ENCODE measurements at regions of chr5 and their contacts with region 1.

Region 1: GRCh38 chr5:39424736-39425637 is at the start of gene DAB2:
- DNase-seq: peak; percentile 84 to 90
- ATAC-seq: peak; percentile 84 to 91 (median 86)
- H3K4me3 ChIP-seq: peak within 1 kb of the TSS; percentile 39 to 74 (median 64)
- H3K27ac ChIP-seq: peak within 1 kb of the TSS; percentile 67 to 92 (median 84)
- H3K4me1 ChIP-seq: peaks cover 0 to 62% (median 53%) of the 10 kb centered on the region in 9 donors
- H3K27me3 ChIP-seq: peaks cover 0 to 19% (median 0%) of the 10 kb centered on the region in 7 donors
- CTCF ChIP-seq: peak in 8 of 9 donors; percentile 35 to 84 (median 64)
- total RNA-seq, gene DAB2: 14.2 to 64.7 (median 26.6) TPM

Region 2: GRCh38 chr5:39498247-39498952 is 73.4 kb after region 1 on chr5:
- intact Hi-C with region 1: loop called in 1 of 10 experiments (anchors 5 kb)
- DNase-seq: no peak
- ATAC-seq: no peak
- H3K4me3 ChIP-seq: no peak overlapping the region
- H3K27ac ChIP-seq: no peak overlapping the region
- H3K4me1 ChIP-seq: peaks cover 0 to 59% (median 25%) of the 10 kb centered on the region in 9 donors
- H3K27me3 ChIP-seq: no peaks in the 10 kb centered on the region
- CTCF ChIP-seq: no peak

Region 3: DNA sequence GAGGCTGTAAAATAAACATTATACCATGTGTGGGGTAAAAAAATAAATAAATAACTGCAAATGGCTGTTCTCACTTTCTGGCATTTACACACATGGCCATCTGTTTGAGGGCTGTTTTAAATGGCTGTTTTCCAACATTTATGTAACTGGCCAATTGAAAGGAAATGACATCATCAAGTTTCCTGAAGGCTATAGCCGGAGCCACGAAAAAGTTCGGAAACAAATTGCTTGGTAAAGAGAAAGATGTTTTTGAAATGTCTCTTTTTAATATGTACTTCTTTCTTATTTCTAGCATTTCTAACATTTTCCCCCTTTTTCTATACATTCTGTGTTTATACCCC is 95.2 kb after region 1 on chr5:
- intact Hi-C with region 1: loop called in 4 of 10 experiments (anchors 5 kb)
- DNase-seq: peak in 1 of 2 donors; percentile 56
- ATAC-seq: peak in 7 of 8 donors; percentile 62 to 96 (median 92)
- H3K4me3 ChIP-seq: peak overlapping the region in 4 of 10 donors; percentile 20 to 24 (median 23)
- H3K27ac ChIP-seq: peak overlapping the region in 9 of 10 donors; percentile 6 to 89 (median 78)
- H3K4me1 ChIP-seq: peaks cover 0 to 51% (median 24%) of the 10 kb centered on the region in 9 donors
- H3K27me3 ChIP-seq: no peaks in the 10 kb centered on the region
- CTCF ChIP-seq: no peak

Region 4: DNA sequence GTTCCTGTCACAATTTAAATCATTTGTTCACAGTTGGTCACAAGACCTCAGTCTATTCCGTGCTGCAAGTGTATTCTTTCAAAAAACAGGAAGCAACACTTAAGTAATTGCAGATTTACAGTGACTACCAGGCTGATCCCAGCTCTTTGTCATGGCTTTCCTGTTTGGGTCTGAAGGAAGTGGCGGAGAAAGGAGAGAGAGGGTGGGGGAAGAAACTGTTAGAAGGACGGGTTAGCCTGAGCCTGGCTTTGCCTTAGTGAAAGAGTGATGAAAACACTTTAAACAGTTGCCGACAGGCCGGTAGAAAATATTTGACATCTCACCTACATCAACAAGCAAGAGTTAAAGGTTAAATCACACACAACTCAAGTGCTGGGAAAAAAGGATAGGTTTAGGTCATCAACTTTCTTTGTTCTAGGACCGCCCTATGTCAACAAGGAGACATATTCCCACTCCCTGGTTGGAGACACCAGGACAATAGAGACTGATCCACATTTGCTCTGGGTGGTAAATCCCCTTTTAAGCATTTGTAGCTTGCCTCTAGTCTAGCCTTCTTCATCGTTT is 102.0 kb after region 1 on chr5:
- intact Hi-C with region 1: loop called in 4 of 10 experiments (anchors 5 kb)
- DNase-seq: peak in 1 of 2 donors; percentile 54
- ATAC-seq: peak; percentile 65 to 94 (median 88)
- H3K4me3 ChIP-seq: no peak overlapping the region
- H3K27ac ChIP-seq: peak overlapping the region; percentile 33 to 89 (median 70)
- H3K4me1 ChIP-seq: peaks cover 0 to 38% (median 18%) of the 10 kb centered on the region in 9 donors
- H3K27me3 ChIP-seq: no peaks in the 10 kb centered on the region
- CTCF ChIP-seq: no peak

Region 5: DNA sequence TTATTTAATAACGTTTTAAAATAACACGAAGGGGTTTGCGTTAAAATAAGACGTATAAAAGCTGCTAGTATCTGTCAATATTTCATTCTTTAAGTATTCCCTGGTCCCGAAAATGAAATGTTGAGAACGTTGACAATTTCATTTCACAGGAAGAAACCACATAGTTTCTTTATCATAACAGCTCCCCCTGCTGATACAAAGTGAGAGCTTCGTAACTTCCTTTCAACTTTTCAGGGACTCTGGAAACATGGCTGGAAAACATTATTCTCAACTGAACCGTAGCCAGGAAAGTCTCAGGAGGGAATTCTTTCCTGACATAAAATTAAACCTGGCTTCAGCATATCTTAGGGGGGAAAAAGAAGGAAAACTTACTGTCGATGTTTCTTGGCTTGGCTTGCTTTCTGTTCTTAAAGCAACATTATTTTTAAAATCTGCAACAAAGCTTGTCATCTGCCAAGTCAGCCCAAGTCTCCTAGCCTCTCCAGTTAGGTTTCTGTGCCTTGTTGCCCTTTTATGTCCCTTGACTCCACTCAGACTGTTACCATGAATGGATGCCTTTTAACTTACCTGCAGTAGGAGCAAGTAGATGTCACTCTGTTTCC is 122.7 kb after region 1 on chr5:
- intact Hi-C with region 1: loop called in 6 of 10 experiments (anchors 1 to 10 kb)
- DNase-seq: peak in 1 of 2 donors; percentile 87
- ATAC-seq: peak in 7 of 8 donors; percentile 59 to 92 (median 84)
- H3K4me3 ChIP-seq: peak overlapping the region in 4 of 10 donors; percentile 5 to 9 (median 5)
- H3K27ac ChIP-seq: peak overlapping the region in 4 of 10 donors; percentile 2 to 41 (median 6)
- H3K4me1 ChIP-seq: peaks cover 0 to 29% (median 7%) of the 10 kb centered on the region in 9 donors
- H3K27me3 ChIP-seq: no peaks in the 10 kb centered on the region
- CTCF ChIP-seq: peak; percentile 45 to 89 (median 78)